ENCODE measurements at regions of chr7 and their contacts with region 1.

Region 1: GRCh38 chr7:99325545-99326407 is at the start of gene ARPC1A:
- DNase-seq: peak; percentile 49 to 94
- H3K4me3 ChIP-seq: peak within 1 kb of the TSS; percentile 78 to 82
- H3K27ac ChIP-seq: peak within 1 kb of the TSS; percentile 84 to 85
- H3K4me1 ChIP-seq: peaks cover 11 to 41% of the 10 kb centered on the region in 2 donors
- H3K27me3 ChIP-seq: no peaks in the 10 kb centered on the region
- CTCF ChIP-seq: peak; percentile 10 to 48 (median 27)
- total RNA-seq, gene ARPC1A: 87.7 TPM

Region 2: GRCh38 chr7:99374103-99375064 is 48.6 kb after region 1 on chr7 and contains the start of gene ARPC1B:
- intact Hi-C with region 1: loop called (anchors 1 kb)
- DNase-seq: peak; percentile 47 to 92
- H3K4me3 ChIP-seq: peak within 1 kb of the TSS; percentile 88 to 94
- H3K27ac ChIP-seq: peak within 1 kb of the TSS; percentile 87 to 97
- H3K4me1 ChIP-seq: peaks cover under 1 to 17% of the 10 kb centered on the region in 2 donors
- H3K27me3 ChIP-seq: no peaks in the 10 kb centered on the region
- CTCF ChIP-seq: no peak
- total RNA-seq, gene ARPC1B: 360 TPM